ENCODE measurements at regions of chr12 and their contacts with region 1.

Region 1: GRCh38 chr12:108803428-108804105 is 53.8 kb downstream of the SSH1 start:
- DNase-seq: peak; percentile 73
- H3K4me3 Mint-ChIP-seq: no peak overlapping the region
- H3K27ac Mint-ChIP-seq: peak overlapping the region; percentile 33
- H3K4me1 Mint-ChIP-seq: peaks cover 7% of the 10 kb centered on the region
- H3K27me3 Mint-ChIP-seq: no peaks in the 10 kb centered on the region

Region 2: DNA sequence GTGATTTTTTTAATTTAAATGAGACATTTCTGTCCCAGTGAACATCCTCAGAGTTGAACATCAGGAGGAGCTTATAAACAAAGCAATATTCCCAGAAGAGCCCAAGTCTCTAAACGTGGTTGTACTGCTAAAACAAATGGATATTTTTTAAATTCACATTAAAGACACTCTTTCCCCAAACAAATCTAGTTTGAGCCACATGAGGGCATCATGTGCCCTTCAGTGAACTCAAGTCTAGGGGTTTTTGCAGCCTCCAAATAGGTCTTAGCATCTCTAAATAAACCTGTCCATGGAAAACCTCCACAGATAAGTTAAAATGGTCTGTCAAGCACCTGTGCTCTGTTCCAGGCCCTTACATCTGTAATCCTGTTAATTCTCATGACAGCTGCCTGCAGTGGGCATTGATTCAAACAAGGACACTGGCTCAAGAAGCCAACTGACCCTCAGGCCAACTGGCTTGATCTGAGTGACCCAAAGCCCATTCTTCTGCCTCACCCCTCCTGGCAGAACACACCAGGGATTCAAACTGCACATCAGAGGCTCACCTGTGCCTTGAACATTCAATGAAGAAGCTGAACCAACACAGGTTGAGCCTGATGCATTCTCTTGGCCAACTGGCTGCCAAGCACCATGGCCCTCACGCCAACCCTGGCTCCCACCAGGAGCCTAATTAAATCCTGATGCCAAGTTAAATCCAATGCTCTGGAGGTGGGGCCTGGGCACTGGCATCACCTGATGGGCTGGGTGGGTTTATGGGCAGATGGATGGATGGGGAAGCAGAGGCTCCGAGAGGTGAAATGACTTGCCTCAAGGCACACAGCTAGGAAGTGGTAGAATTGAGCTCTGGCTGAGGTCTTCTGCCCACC is 232.6 kb before region 1 on chr12:
- CTCF ChIA-PET with region 1: interaction called, 12 read pairs
- POLR2A ChIA-PET with region 1: no interaction called
- intact Hi-C with region 1: loop called (anchors 1 kb)
- DNase-seq: peak; percentile 18
- H3K4me3 Mint-ChIP-seq: no peak overlapping the region
- H3K27ac Mint-ChIP-seq: no peak overlapping the region
- H3K4me1 Mint-ChIP-seq: peaks cover 76% of the 10 kb centered on the region
- H3K27me3 Mint-ChIP-seq: no peaks in the 10 kb centered on the region

Region 3: DNA sequence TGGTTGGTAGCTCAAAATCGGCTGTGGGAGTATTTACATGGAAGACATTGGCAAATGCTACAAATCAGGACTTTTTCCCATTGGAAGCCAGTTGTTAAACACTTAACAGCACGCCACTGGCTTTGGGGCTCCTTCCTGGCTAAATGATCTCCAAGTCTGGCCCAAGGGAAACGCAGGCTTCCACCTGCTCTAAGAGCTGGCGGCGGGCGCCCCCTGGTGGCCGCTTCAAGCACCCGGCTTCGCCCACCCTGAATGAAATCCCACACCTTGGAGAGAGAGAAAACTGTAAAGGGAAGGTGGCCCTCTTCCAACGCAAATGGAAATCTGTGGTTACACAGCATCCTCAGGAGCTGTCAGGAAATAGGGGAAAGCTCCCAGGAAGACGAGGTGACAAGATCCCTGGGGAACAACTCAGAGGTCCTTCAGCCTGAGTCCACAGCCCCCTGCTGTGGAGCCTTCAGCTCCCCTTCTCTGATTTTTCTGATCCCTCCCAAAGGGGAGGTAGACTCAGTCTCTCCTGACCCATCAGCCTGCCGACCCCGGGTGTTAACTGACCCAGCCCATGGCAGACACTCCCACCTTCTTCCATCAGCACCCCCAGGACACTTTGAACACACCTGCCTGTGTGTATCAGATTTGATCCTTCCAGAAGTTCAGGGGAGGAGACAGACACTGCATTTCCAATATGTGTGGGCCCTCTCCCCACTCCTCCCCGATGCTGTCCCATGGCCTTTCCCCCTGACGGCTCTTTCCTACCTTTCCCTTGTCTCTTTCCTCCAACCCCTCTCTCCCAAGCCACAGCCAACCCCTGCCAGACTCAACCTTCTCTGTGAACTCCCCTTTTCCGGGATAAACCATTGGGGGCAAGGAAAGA is 185.3 kb before region 1 on chr12:
- CTCF ChIA-PET with region 1: interaction called, 25 read pairs
- POLR2A ChIA-PET with region 1: no interaction called
- intact Hi-C with region 1: loop called (anchors 1 kb)
- DNase-seq: peak; percentile 84
- H3K4me3 Mint-ChIP-seq: no peak overlapping the region
- H3K27ac Mint-ChIP-seq: peak overlapping the region; percentile 25
- H3K4me1 Mint-ChIP-seq: peaks cover 54% of the 10 kb centered on the region
- H3K27me3 Mint-ChIP-seq: no peaks in the 10 kb centered on the region

Region 4: DNA sequence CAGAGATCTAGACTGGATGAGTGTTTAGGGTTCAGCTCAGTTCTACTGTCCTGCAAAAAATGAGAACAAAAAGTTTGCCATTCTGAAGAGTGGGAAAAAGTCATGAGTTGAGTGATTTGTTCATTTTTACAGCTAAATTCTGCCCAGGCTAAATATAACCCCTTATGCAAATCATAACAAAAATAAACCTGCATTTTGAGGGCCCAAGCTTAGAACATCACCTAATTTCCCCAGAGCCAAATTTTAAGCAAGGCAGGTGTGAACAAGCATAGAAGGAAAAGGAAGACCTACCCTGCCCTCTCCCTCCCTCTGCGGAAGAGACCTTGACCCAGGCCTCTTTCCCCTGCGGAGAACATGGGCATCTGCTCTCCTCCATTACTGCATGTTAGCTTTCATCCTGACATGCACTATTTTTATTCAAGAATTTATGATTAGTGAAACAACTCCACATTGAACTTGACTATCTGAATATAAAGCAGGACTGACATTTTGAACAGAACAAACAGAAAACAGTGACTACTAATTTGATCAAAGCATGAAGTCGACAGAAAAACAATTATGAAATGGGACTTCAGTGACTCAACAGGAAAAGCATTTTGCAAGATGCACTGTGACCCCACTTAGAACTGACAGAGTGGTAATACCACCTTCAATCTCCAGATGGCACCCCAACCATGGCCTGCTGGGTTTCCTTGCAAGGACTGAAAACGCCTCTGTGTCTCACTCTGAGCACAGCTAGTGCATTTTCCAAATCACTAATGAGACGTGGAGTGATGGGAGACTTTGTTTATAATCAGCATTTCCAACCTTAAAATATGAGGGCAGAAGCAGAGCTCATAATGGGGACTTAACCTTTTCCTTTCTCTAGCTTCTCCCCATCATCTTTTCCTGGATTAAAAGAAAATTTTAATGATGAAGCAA is 139.0 kb before region 1 on chr12:
- CTCF ChIA-PET with region 1: interaction called, 322 read pairs
- POLR2A ChIA-PET with region 1: interaction called, 7 read pairs
- intact Hi-C with region 1: loop called (anchors 1 kb)
- DNase-seq: peak; percentile 92
- H3K4me3 Mint-ChIP-seq: peak overlapping the region; percentile 33
- H3K27ac Mint-ChIP-seq: peak overlapping the region; percentile 83
- H3K4me1 Mint-ChIP-seq: peaks cover 23% of the 10 kb centered on the region
- H3K27me3 Mint-ChIP-seq: no peaks in the 10 kb centered on the region

Region 5: GRCh38 chr12:108691175-108691997 is 112.2 kb before region 1 on chr12:
- CTCF ChIA-PET with region 1: interaction called, 21 read pairs
- POLR2A ChIA-PET with region 1: no interaction called
- intact Hi-C with region 1: loop called (anchors 1 kb)
- DNase-seq: peak; percentile 91
- H3K4me3 Mint-ChIP-seq: peak overlapping the region; percentile 56
- H3K27ac Mint-ChIP-seq: peak overlapping the region; percentile 94
- H3K4me1 Mint-ChIP-seq: peaks cover 70% of the 10 kb centered on the region
- H3K27me3 Mint-ChIP-seq: no peaks in the 10 kb centered on the region

Region 6: GRCh38 chr12:108821407-108822397 is 18.1 kb after region 1 on chr12:
- CTCF ChIA-PET with region 1: interaction called, 16 read pairs
- POLR2A ChIA-PET with region 1: no interaction called
- intact Hi-C with region 1: no loop called
- DNase-seq: peak; percentile 60
- H3K4me3 Mint-ChIP-seq: no peak overlapping the region
- H3K27ac Mint-ChIP-seq: peak overlapping the region; percentile 47
- H3K4me1 Mint-ChIP-seq: peaks cover 29% of the 10 kb centered on the region
- H3K27me3 Mint-ChIP-seq: no peaks in the 10 kb centered on the region

Region 7: DNA sequence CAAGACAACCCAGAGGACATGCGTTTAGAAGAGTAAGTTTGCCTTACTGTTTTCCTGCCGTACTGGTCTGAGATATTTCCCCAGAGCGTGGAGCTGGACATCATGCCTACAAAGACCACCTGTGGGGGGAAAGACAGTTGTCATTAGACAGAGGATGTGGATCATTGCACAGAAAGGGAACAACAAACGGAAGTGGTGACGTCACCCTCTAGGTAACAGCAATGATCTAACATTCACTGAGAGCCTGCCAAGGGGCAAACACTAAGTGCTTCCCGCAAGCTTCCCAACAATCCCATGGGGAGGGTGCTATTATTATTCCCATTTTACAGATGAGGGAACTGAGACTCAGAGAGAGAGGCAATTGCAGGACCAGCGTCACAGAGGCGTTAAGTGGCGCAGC is 168.8 kb after region 1 on chr12:
- CTCF ChIA-PET with region 1: no interaction called
- POLR2A ChIA-PET with region 1: no interaction called
- intact Hi-C with region 1: no loop called
- DNase-seq: no peak
- H3K4me3 Mint-ChIP-seq: no peak overlapping the region
- H3K27ac Mint-ChIP-seq: no peak overlapping the region
- H3K4me1 Mint-ChIP-seq: no peaks in the 10 kb centered on the region
- H3K27me3 Mint-ChIP-seq: peaks cover 10% of the 10 kb centered on the region